ENCODE measurements at regions of chr17 and their contacts with region 1.

Region 1: GRCh38 chr17:45357364-45357997 is 40.7 kb upstream of the MAP3K14 start:
- DNase-seq: peak; percentile 63
- ATAC-seq: peak; percentile 80
- H3K4me3 ChIP-seq: no peak overlapping the region
- H3K27ac ChIP-seq: peak overlapping the region; percentile 91
- H3K4me1 ChIP-seq: peaks cover 23% of the 10 kb centered on the region
- H3K27me3 ChIP-seq: no peaks in the 10 kb centered on the region
- CTCF ChIP-seq: no peak
- EP300 ChIP-seq: peak; percentile 24 to 40; a peak in 1 of 4 replicates
- POLR2A ChIP-seq: no peak
- RAD21 ChIP-seq: peak; percentile 14; the same call in 1 of the 2 replicates

Region 2: DNA sequence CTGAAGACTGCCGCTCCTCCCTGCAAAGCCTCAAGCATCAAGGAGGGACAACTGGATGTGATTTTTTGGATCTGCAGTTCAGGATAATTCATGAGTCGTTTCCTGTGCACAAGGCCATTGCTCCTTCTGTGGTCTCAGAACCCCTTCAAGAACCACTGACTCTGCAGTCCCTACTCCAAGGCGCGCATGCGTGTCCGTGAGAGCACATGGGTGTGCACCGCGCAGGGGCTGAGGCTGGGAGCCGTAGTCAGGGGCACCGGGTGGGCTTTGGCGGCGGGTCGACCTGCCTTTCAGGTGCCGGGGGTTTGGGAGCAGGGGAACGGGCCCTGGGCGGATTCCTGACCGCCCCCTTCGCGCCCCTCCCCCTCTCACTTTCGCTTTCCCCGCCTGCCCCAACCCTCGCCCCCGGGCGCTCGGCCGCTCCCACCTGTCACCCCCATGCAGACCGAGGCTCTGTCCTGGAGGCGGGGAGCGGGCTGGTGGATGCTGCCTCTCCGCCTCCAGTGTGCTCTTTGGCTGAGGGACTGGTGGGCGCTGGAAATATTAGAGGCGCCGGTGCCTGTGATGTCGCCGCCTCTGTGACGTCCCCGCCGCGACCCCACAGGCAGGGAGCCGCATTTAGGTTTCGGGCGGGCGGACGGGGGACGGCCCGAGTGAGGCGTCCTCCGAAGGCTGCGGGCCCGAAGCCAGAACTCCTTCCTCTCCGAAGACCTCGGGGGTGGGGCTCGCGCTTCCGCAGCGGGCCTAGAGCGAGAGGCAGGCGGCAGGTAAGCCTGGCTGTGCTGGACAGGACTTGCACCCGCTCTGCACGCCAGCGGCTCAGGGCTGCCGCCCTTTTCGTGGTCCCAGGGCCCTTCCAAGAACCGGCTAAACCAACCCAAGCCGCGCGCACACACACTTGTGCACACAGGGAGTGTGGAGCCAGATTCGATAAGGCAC is 95.6 kb before region 1 on chr17 and contains the start of gene SPATA32:
- CTCF ChIA-PET with region 1: no interaction called
- POLR2A ChIA-PET with region 1: no interaction called
- RAD21 ChIA-PET with region 1: no interaction called
- SMC1A ChIA-PET with region 1: no interaction called
- in situ Hi-C with region 1: no loop called
- intact Hi-C with region 1: no loop called
- DNase-seq: no peak
- ATAC-seq: peak; percentile 87
- H3K4me3 ChIP-seq: peak within 1 kb of the TSS; percentile 75
- H3K27ac ChIP-seq: peak within 1 kb of the TSS; percentile 56
- H3K4me1 ChIP-seq: peaks cover 17% of the 10 kb centered on the region
- H3K27me3 ChIP-seq: no peaks in the 10 kb centered on the region
- CTCF ChIP-seq: no peak
- EP300 ChIP-seq: no peak
- POLR2A ChIP-seq: peak; percentile 73
- RAD21 ChIP-seq: no peak
- polyA plus RNA-seq, gene SPATA32: 0.11 to 0.13 TPM

Region 3: GRCh38 chr17:45293413-45294211 is 63.9 kb before region 1 on chr17:
- CTCF ChIA-PET with region 1: interaction called, 3 read pairs
- POLR2A ChIA-PET with region 1: interaction called, 4 read pairs
- RAD21 ChIA-PET with region 1: interaction called, 11 read pairs
- SMC1A ChIA-PET with region 1: interaction called, 8 read pairs
- in situ Hi-C with region 1: no loop called
- intact Hi-C with region 1: no loop called
- DNase-seq: no peak
- ATAC-seq: peak; percentile 63
- H3K4me3 ChIP-seq: no peak overlapping the region
- H3K27ac ChIP-seq: peak overlapping the region; percentile 42
- H3K4me1 ChIP-seq: peaks cover 76% of the 10 kb centered on the region
- H3K27me3 ChIP-seq: no peaks in the 10 kb centered on the region
- CTCF ChIP-seq: peak in 1 of 3 experiments; percentile 11; a peak in 1 of 6 replicates
- EP300 ChIP-seq: no peak
- POLR2A ChIP-seq: no peak
- RAD21 ChIP-seq: no peak

Region 4: DNA sequence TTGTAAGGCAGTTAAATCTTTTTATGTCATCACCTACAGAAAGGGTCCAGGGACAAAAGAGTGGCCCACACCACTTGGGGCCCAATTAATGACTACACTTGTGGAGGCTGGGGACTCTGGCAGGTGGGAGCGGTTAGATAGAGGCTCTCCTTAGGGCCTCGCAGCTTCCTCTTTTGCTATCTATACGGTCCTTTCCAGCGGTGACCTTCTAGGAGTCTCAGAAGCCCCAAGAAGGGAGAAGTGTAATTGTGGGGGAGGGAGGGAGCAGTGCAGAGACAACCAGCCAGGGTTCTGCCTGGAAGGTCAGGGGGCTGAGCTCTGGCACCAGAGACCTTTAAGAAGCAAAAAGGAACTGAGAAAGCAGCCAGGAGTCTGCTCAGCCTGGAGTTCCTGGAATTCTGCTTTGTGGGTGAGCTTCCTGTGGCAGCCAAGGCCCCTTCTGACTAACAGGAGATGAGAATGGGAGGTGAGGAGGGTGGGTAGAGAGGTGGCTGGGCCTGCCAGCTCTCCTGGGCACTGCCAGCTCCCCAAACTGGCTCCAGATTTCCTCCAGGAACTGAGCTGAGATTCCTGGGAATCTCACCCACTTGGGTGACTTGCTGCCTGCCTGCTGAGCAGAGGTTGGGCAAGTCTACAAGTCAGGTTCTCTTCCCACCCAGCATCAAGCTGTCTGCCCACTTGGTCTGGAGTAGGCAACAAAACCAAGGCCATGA is 24.3 kb before region 1 on chr17:
- CTCF ChIA-PET with region 1: interaction called, 7 read pairs
- POLR2A ChIA-PET with region 1: interaction called, 11 read pairs
- RAD21 ChIA-PET with region 1: interaction called, 8 read pairs
- SMC1A ChIA-PET with region 1: interaction called, 15 read pairs
- in situ Hi-C with region 1: no loop called
- intact Hi-C with region 1: loop called (anchors 1 kb)
- DNase-seq: no peak
- ATAC-seq: peak; percentile 78
- H3K4me3 ChIP-seq: peak overlapping the region; percentile 3; the same call in 1 of the 2 replicates
- H3K27ac ChIP-seq: peak overlapping the region; percentile 33
- H3K4me1 ChIP-seq: peaks cover 43% of the 10 kb centered on the region
- H3K27me3 ChIP-seq: no peaks in the 10 kb centered on the region
- CTCF ChIP-seq: no peak
- EP300 ChIP-seq: peak in 1 of 2 experiments; percentile 42; a peak in 1 of 4 replicates
- POLR2A ChIP-seq: no peak
- RAD21 ChIP-seq: no peak

Region 5: DNA sequence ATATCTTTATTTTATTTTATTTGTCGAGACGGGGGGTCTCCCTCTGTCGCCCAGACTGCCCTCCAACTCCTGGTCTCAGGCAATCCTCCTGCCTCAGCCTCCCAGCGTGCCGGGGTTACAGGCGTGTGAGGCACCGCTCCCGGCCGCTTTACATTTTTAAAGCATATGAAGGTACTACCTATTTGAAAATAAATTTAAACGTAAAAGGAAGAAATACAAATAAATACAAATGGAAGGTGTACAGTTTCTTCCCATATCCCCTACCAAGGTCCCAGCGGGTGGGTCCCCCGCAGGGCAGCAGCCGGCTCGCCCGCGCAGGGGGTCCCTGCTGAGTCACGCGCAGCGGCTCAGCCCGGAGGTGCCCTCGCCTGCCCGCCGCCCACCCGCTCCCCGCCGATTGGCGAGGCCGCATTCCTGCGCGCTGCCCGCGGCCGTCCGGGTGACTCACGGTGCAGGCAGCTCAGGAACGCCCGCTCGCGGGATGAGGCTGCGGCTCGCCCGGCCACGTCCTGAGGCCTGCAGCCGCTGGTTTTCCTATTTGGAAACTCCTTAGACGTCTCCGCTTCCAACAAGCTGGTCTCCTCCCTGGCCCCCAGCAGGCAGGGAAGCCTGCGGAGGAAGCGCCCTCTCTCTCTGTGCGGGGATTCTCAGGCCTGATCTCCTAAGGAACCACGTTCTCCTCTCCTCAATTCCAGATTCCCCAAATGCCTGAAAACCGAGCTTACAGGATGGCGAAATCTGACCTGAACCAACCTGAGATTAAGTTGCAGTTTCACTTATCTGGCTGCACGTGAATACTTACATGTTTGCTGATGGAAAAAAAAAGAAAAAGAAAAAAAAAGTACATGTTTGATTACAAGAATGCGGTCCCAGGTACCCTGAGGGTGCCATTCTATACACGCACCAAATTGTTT is 14.2 kb after region 1 on chr17:
- CTCF ChIA-PET with region 1: interaction called, 9 read pairs
- POLR2A ChIA-PET with region 1: interaction called, 8 read pairs
- RAD21 ChIA-PET with region 1: interaction called, 19 read pairs
- SMC1A ChIA-PET with region 1: interaction called, 47 read pairs
- in situ Hi-C with region 1: no loop called
- intact Hi-C with region 1: loop called (anchors 2 kb)
- DNase-seq: no peak
- ATAC-seq: no peak
- H3K4me3 ChIP-seq: no peak overlapping the region
- H3K27ac ChIP-seq: 0 out of 2 replicates have a peak overlapping the region, but pooled peaks have one; percentile 17
- H3K4me1 ChIP-seq: peaks cover 33% of the 10 kb centered on the region
- H3K27me3 ChIP-seq: no peaks in the 10 kb centered on the region
- CTCF ChIP-seq: no peak
- EP300 ChIP-seq: no peak
- POLR2A ChIP-seq: no peak
- RAD21 ChIP-seq: no peak

Measured in GM12878 (cell line).